Tibial artery (tissue), 4 donors: ENCODE measurements at regions of chrX and their contacts with region 1.

Region 1: DNA sequence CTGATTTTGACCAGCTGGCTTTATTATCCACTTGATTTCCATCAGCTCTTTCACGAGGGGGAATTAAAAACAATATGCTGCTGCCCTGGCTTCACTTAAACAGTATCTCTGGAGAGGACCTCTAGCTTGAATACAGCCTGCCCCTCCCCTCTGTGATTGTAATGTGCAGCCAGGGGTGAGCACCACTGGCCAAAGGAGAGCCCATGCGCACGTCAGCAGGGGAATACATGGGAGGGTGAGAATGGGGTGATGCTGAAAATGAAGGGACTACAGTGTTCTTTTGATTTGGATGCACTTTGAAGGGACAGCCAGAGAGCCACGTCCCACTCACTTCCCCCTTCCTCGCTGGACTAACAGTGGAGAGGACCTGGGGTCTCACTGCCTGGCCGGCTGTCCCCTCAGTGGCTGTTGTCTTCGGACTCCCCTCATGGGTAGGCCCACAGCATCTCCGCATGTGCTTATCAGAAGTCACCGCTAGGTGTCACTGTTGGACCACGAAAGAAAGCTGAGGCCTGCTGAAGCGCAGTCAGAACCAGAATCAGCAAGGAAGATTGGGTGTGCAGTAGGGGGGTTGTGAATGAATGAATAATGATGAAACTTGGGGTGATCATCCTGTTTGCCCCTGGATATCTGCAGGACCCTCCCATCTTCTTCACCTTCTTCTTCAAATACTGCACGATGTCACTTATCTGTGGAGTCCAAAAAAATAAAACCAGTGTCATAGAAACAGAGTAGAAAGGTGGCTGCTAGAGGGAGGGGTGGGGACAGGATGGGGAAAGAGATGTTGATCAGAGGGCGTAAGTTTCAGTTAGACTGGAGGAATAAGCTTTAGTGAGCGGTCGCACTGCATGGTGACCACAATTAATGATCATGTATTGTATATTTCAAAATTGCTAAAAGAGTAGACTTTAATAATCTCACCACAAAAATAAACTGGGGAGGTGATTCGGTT is 32.8 kb downstream of the CLCN4 start:
- DNase-seq: peak; percentile 57 to 73
- H3K4me3 ChIP-seq: no peak overlapping the region
- H3K27ac ChIP-seq: no peak overlapping the region
- H3K4me1 ChIP-seq: peaks cover 0 to 5% (median 0%) of the 10 kb centered on the region in 4 donors
- H3K27me3 ChIP-seq: no peaks in the 10 kb centered on the region
- CTCF ChIP-seq: peak; percentile 52 to 75

Region 2: GRCh38 chrX:10152086-10152485 is 37.5 kb before region 1 on chrX:
- intact Hi-C with region 1: no loop called
- DNase-seq: no peak
- H3K4me3 ChIP-seq: no peak overlapping the region
- H3K27ac ChIP-seq: no peak overlapping the region
- H3K4me1 ChIP-seq: no peaks in the 10 kb centered on the region
- H3K27me3 ChIP-seq: no peaks in the 10 kb centered on the region
- CTCF ChIP-seq: no peak

Region 3: GRCh38 chrX:10620121-10620699 is 430.6 kb after region 1 on chrX and contains the start of gene MID1:
- intact Hi-C with region 1: loop called (anchors 5 kb)
- DNase-seq: peak; percentile 73 to 79
- H3K4me3 ChIP-seq: peak within 1 kb of the TSS; percentile 58 to 64
- H3K27ac ChIP-seq: peak within 1 kb of the TSS; percentile 54 to 70
- H3K4me1 ChIP-seq: no peaks in the 10 kb centered on the region
- H3K27me3 ChIP-seq: no peaks in the 10 kb centered on the region
- CTCF ChIP-seq: no peak

Region 4: GRCh38 chrX:10697616-10698317 is 508.2 kb after region 1 on chrX:
- intact Hi-C with region 1: no loop called
- DNase-seq: no peak
- H3K4me3 ChIP-seq: no peak overlapping the region
- H3K27ac ChIP-seq: no peak overlapping the region
- H3K4me1 ChIP-seq: no peaks in the 10 kb centered on the region
- H3K27me3 ChIP-seq: no peaks in the 10 kb centered on the region
- CTCF ChIP-seq: no peak

Region 5: GRCh38 chrX:10722851-10723250 is 533.3 kb after region 1 on chrX:
- intact Hi-C with region 1: loop called (anchors 5 kb)
- DNase-seq: peak; percentile 63 to 68
- H3K4me3 ChIP-seq: no peak overlapping the region
- H3K27ac ChIP-seq: no peak overlapping the region
- H3K4me1 ChIP-seq: no peaks in the 10 kb centered on the region
- H3K27me3 ChIP-seq: no peaks in the 10 kb centered on the region
- CTCF ChIP-seq: peak; percentile 51 to 64

Region 6: GRCh38 chrX:10884246-10884645 is 694.7 kb after region 1 on chrX:
- intact Hi-C with region 1: no loop called
- DNase-seq: no peak
- H3K4me3 ChIP-seq: no peak overlapping the region
- H3K27ac ChIP-seq: no peak overlapping the region
- H3K4me1 ChIP-seq: no peaks in the 10 kb centered on the region
- H3K27me3 ChIP-seq: no peaks in the 10 kb centered on the region
- CTCF ChIP-seq: no peak

Region 7: DNA sequence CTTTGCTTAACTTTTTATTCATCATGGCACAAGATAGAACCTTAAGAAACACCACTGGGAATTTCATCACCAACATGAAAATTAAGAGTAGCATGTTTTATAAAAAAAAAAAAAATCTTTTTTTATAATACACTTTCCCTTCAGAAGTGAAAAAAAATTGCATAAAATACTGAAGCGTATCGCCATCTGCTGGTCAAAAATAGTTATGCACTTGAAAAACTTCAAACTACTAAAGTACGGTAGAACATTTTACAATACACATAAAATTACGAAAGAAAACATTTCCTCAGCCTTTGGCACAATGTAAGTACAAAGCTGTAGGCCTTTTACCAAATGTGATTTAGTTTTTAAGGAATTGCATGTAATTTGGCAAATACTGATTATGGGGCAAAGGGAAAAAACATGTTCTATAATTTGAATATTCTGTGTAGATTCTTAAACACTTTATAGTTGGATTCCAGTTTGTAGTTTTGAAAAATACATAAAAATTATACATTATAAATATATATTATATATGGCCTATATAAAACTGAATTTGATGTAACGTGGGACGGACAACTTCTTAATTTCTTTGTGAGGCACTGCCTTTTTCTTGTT is 948.0 kb after region 1 on chrX:
- intact Hi-C with region 1: loop called (anchors 5 kb)
- DNase-seq: no peak
- H3K4me3 ChIP-seq: no peak overlapping the region
- H3K27ac ChIP-seq: no peak overlapping the region
- H3K4me1 ChIP-seq: no peaks in the 10 kb centered on the region
- H3K27me3 ChIP-seq: no peaks in the 10 kb centered on the region
- CTCF ChIP-seq: peak; percentile 56 to 61